A673 (cell line): ENCODE measurements at regions of chr4 and their contacts with region 1.

Region 1: DNA sequence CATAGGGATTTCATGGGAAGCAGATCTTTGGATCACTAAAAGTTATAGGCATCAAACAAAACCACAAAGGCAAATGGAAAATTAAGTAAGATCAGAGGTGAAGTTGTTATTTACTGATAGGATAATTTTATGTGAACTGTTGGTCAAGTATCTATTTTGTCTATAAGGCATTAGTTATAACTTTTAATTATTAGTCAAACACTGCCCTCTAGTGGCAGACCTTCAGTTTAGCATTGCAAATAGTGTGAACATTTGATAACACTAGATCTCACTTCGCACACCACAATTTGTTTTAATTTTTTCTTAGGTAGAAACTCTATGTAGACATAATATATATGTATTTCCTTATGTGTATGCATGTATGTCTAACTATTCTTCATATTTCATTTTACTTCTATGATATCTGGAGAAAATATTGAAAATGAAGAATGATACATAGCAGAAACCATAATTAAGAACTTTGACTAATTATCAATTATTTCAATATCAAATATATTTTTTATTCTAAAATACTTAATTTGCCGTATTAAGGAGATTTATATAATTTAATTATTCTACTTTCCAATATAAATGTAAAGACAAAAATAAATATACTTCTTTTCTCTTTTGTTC is 214.5 kb upstream of the TACR3 start:
- DNase-seq: peak; percentile 62
- H3K4me3 ChIP-seq: no peak overlapping the region
- H3K27ac ChIP-seq: no peak overlapping the region
- H3K4me1 ChIP-seq: no peaks in the 10 kb centered on the region
- H3K27me3 ChIP-seq: no peaks in the 10 kb centered on the region
- CTCF ChIP-seq: peak; percentile 77

Region 2: GRCh38 chr4:103046416-103047290 is 887.6 kb before region 1 on chr4:
- CTCF ChIA-PET with region 1: no interaction called
- POLR2A ChIA-PET with region 1: no interaction called
- intact Hi-C with region 1: loop called (anchors 10 kb)
- DNase-seq: peak; percentile 61
- H3K4me3 ChIP-seq: no peak overlapping the region
- H3K27ac ChIP-seq: no peak overlapping the region
- H3K4me1 ChIP-seq: no peaks in the 10 kb centered on the region
- H3K27me3 ChIP-seq: no peaks in the 10 kb centered on the region
- CTCF ChIP-seq: peak; percentile 81

Region 3: GRCh38 chr4:103099691-103100392 is 834.4 kb before region 1 on chr4 and contains the start of gene BDH2:
- CTCF ChIA-PET with region 1: interaction called, 4 read pairs
- POLR2A ChIA-PET with region 1: no interaction called
- intact Hi-C with region 1: loop called (anchors 5 kb)
- DNase-seq: peak; percentile 93
- H3K4me3 ChIP-seq: peak within 1 kb of the TSS; percentile 49
- H3K27ac ChIP-seq: peak within 1 kb of the TSS; percentile 12
- H3K4me1 ChIP-seq: peaks cover 6% of the 10 kb centered on the region
- H3K27me3 ChIP-seq: no peaks in the 10 kb centered on the region
- CTCF ChIP-seq: peak; percentile 78
- total RNA-seq, gene BDH2: 28.3 and 33.1 TPM in 2 replicates

Region 4: GRCh38 chr4:104099141-104099540 is 164.9 kb after region 1 on chr4:
- CTCF ChIA-PET with region 1: no interaction called
- POLR2A ChIA-PET with region 1: no interaction called
- intact Hi-C with region 1: no loop called
- DNase-seq: no peak
- H3K4me3 ChIP-seq: no peak overlapping the region
- H3K27ac ChIP-seq: no peak overlapping the region
- H3K4me1 ChIP-seq: no peaks in the 10 kb centered on the region
- H3K27me3 ChIP-seq: no peaks in the 10 kb centered on the region
- CTCF ChIP-seq: no peak